Natural killer cell (primary cell): ENCODE measurements at regions of chr7 and their contacts with region 1.

Region 1: DNA sequence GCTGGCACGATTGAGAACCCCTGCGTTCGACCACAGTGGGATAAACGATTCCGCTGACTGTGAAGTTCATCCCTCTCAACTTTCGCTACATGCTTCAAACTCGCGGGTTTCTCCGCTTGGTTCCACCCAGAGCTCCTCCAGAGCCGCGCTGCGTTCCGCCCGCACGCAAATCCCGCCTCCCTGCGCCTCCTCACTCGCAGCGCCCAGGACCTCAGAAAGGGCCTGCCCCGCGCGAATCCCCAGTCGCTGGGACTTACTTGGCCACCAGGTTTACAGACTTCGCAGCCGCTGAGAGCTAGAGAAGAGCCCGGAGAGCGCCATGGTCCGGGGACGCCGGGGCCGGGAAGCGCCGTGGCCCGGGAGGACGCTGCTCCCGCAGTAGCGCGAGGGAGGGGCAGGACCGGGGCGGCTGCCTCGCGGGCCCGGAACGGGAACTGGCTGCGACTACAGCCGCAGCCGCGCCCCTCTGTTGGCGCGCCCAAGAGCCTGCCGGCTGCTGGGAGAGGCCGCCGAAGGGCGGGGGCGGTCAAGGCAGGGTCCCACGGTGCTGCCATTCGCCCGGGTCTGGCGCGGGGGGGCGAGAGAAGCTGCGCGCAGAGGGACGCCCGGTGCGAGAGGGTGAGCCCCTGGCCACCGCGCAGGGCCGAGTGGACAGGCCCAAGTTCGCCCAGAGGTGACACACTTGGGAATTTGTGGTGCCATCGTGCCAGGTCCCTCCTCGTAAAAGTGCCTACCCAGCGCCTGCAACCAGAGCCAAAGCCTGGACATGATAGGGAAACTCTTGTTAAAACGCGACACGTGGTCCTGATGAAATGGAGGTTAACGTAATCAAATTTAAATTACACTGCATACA is at the start of gene NOD1:
- DNase-seq: peak; percentile 47 to 74
- ATAC-seq: peak; percentile 76 to 91 (median 80)
- H3K4me3 ChIP-seq: peak within 1 kb of the TSS; percentile 91
- H3K4me3 Mint-ChIP-seq: peak within 1 kb of the TSS; percentile 97
- H3K27ac ChIP-seq: peak within 1 kb of the TSS; percentile 84
- H3K27ac Mint-ChIP-seq: no peak within 1 kb of the TSS
- H3K4me1 ChIP-seq: peaks cover 26% of the 10 kb centered on the region
- H3K4me1 Mint-ChIP-seq: peaks cover 44 to 56% of the 10 kb centered on the region in 2 donors
- H3K27me3 ChIP-seq: no peaks in the 10 kb centered on the region
- H3K27me3 Mint-ChIP-seq: no peaks in the 10 kb centered on the region
- CTCF ChIP-seq: no peak
- total RNA-seq, gene NOD1: 28.2 to 32.4 (median 31.2) TPM

Region 2: DNA sequence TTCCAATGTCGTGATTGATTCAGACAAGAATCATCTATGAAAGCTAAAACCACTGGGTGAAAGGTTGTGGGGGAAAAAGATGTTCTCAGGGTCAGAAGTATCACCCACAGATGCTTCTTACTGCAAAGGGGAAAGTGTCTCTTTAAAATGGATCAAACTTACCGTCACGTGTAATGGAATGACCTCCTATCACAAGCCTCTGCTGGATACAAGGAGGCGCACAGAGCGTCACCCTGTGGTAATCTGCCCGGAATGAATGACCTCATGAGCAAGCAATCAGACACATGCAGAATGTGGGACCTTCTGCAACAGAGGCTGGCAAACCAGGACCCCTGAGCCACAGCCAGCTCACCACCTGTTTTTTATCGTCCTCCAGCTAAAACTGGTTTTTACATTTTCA is 639.3 kb before region 1 on chr7:
- intact Hi-C with region 1: no loop called
- DNase-seq: no peak
- ATAC-seq: no peak
- H3K4me3 ChIP-seq: no peak overlapping the region
- H3K4me3 Mint-ChIP-seq: no peak overlapping the region
- H3K27ac ChIP-seq: no peak overlapping the region
- H3K27ac Mint-ChIP-seq: no peak overlapping the region
- H3K4me1 ChIP-seq: no peaks in the 10 kb centered on the region
- H3K4me1 Mint-ChIP-seq: no peaks in the 10 kb centered on the region
- H3K27me3 ChIP-seq: no peaks in the 10 kb centered on the region
- H3K27me3 Mint-ChIP-seq: peaks cover 5 to 40% of the 10 kb centered on the region in 2 donors
- CTCF ChIP-seq: no peak

Region 3: DNA sequence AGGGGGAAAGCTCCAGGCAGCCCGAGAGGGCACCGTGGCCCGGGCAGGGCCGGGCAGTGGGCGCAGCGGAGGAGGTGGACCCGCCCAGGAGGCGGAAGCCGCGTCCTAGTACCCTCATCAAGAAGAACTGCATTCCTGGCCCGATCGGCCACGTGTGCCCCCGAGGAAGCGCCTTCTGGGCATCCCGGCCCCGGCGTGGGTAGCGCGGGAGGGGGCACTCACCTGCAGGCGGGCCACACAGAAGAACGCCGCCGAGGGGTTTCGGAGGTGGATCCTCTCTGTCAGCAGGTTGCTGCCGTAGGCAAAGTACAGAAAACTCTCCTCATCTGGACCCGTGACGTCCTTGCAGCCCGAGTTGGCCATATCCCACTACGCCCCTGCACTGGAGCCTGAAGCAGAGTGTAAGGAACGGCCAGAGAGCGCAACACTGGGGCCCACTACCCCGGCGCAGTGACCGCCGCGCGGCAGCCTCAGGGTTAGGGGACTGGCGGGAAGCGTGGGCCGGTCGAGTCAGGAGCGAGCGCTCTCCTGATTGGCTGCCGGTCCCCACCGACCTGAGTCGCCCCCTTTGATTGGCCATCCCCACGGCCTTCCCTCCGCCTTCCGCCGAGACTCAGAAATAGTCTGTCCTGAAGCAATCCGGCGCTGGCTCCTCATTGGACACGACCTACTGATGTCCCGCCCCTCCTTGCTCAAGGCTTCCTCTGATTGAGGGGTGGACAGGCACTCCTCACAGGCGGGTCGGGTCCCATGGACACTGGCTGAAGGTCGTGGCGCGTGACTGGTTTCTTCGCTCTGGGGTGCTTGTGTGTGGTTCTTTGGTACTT is 26.0 kb after region 1 on chr7 and contains the start of gene GGCT:
- intact Hi-C with region 1: loop called (anchors 1 kb)
- DNase-seq: peak; percentile 97 to 98
- ATAC-seq: peak; percentile 96 to 100 (median 98)
- H3K4me3 ChIP-seq: peak within 1 kb of the TSS; percentile 85
- H3K4me3 Mint-ChIP-seq: peak within 1 kb of the TSS; percentile 89
- H3K27ac ChIP-seq: peak within 1 kb of the TSS; percentile 51
- H3K27ac Mint-ChIP-seq: peak within 1 kb of the TSS; percentile 77 to 91
- H3K4me1 ChIP-seq: peaks cover 15% of the 10 kb centered on the region
- H3K4me1 Mint-ChIP-seq: peaks cover 31 to 35% of the 10 kb centered on the region in 2 donors
- H3K27me3 ChIP-seq: no peaks in the 10 kb centered on the region
- H3K27me3 Mint-ChIP-seq: no peaks in the 10 kb centered on the region
- CTCF ChIP-seq: no peak
- total RNA-seq, gene GGCT: 8.7 to 10.8 (median 9.2) TPM